Activated CD8-positive, alpha-beta T cell treated with anti-CD3 and anti-CD28 coated beads, Interleukin-2, amount 10 ng/mL, durations not matched to agents 7 days and 5 days (primary cell): ENCODE measurements at regions of chr14 and their contacts with region 1.

Region 1: DNA sequence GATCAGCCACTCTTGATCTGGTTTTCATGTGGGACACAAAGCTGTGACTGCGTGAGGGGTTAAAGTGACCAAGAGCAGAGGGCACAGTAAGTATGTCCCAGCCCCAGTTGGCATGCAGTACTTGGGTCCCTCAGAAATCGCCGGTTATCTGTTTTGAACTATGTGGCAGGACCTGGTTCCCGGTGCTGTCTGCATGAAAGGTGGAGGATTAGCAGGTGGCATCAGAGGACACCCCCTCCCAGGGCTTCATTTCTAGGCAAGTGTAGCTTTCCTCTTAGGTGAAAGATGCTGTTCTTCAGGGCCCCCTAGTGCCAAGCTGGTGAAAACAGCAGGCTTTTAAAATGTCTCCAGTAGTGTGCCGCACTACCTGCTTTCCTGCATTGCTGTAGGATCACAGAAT is 57.1 kb downstream of the ATG14 start:
- DNase-seq: peak; percentile 72
- ATAC-seq: peak; percentile 90
- H3K4me3 Mint-ChIP-seq: no peak overlapping the region
- H3K27ac Mint-ChIP-seq: peak overlapping the region; percentile 66
- H3K4me1 Mint-ChIP-seq: peaks cover 20% of the 10 kb centered on the region
- H3K27me3 Mint-ChIP-seq: no peaks in the 10 kb centered on the region

Region 2: GRCh38 chr14:55117803-55118441 is 236.6 kb before region 1 on chr14:
- CTCF ChIA-PET with region 1: no interaction called
- POLR2A ChIA-PET with region 1: no interaction called
- DNase-seq: no peak
- ATAC-seq: peak; percentile 76
- H3K4me3 Mint-ChIP-seq: no peak overlapping the region
- H3K27ac Mint-ChIP-seq: no peak overlapping the region
- H3K4me1 Mint-ChIP-seq: peaks cover 20% of the 10 kb centered on the region
- H3K27me3 Mint-ChIP-seq: peaks cover 26% of the 10 kb centered on the region

Region 3: DNA sequence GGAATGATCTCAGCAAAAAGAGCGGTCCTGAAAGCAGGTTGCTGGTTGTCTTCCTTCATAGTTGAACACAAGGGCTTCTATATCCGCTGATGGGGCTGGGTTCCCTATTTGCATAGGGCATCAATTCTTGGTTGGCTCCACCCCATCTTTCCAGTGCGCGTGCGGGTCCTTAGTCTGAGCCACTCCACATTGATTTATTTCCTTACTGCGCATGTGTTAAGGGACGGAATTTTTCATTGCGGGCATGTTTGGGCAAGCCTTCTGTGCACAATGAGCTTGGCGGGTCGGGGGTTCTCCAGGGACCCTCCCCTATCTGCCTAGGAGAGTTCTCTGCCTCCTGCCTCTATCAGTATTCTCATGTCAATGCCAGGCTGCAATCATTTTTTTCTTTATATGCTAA is 141.9 kb before region 1 on chr14:
- CTCF ChIA-PET with region 1: interaction called, 34 read pairs
- POLR2A ChIA-PET with region 1: no interaction called
- DNase-seq: no peak
- ATAC-seq: no peak
- H3K4me3 Mint-ChIP-seq: no peak overlapping the region
- H3K27ac Mint-ChIP-seq: no peak overlapping the region
- H3K4me1 Mint-ChIP-seq: peaks cover 3% of the 10 kb centered on the region
- H3K27me3 Mint-ChIP-seq: peaks cover 4% of the 10 kb centered on the region

Region 4: GRCh38 chr14:55270832-55271565 is 83.5 kb before region 1 on chr14 and contains the start of gene FBXO34:
- CTCF ChIA-PET with region 1: interaction called, 121 read pairs
- POLR2A ChIA-PET with region 1: interaction called, 3 read pairs
- DNase-seq: peak; percentile 99
- ATAC-seq: peak; percentile 90
- H3K4me3 Mint-ChIP-seq: peak within 1 kb of the TSS; percentile 90
- H3K27ac Mint-ChIP-seq: peak within 1 kb of the TSS; percentile 97
- H3K4me1 Mint-ChIP-seq: peaks cover 36% of the 10 kb centered on the region
- H3K27me3 Mint-ChIP-seq: no peaks in the 10 kb centered on the region
- total RNA-seq, gene FBXO34: 17.4 to 18.3 TPM

Region 5: GRCh38 chr14:55333711-55334485 is 20.6 kb before region 1 on chr14:
- CTCF ChIA-PET with region 1: interaction called, 29 read pairs
- POLR2A ChIA-PET with region 1: interaction called, 4 read pairs
- DNase-seq: no peak
- ATAC-seq: peak; percentile 37
- H3K4me3 Mint-ChIP-seq: peak overlapping the region; percentile 64
- H3K27ac Mint-ChIP-seq: peak overlapping the region; percentile 83
- H3K4me1 Mint-ChIP-seq: peaks cover 66% of the 10 kb centered on the region
- H3K27me3 Mint-ChIP-seq: no peaks in the 10 kb centered on the region

Region 6: DNA sequence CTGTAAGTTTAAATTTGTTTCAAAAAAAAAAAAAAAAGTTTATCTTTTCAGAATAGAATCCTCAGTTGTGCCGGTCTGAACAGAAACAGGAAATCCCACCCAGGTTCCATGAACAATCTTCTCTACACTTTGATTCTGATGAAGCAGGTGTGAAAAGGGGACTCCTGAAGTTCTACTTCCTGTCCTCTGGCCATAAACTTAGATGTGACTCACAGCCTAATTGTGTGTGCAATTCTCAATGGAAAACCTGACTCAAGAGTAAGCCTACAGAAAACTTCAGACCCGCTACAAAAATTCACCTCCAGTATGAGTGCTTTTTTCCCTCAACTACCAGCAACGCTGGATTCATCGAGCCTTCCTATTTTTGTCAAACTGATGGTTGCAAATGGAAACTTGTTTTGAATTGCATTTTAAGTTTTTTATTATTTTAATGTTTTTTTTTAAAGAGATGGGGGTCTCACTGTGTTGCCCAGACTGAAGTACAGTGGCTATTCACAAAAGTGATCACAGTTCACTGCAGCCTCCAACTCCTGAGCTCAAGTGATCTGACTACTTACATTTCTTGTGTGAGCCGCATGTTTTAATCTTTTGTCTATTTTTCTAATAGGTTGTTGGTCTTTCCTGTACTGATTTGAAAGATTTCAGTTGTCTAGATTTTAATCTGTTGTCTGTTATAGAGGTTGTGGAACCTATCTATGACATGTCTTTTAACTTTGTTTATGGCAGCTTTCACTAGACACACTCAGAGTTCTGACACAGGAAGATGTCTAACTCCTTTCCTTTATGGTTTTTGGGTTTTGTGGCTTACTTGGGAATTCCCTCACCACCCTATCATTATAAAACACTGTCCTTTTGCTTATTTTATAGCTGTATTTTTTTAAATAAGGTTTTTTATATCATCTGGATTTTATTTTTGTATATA is 19.5 kb after region 1 on chr14:
- CTCF ChIA-PET with region 1: interaction called, 14 read pairs
- POLR2A ChIA-PET with region 1: interaction called, 4 read pairs
- DNase-seq: peak; percentile 41
- ATAC-seq: peak; percentile 77
- H3K4me3 Mint-ChIP-seq: peak overlapping the region; percentile 30
- H3K27ac Mint-ChIP-seq: peak overlapping the region; percentile 75
- H3K4me1 Mint-ChIP-seq: peaks cover 19% of the 10 kb centered on the region
- H3K27me3 Mint-ChIP-seq: no peaks in the 10 kb centered on the region